ENCODE measurements at regions of chr7 and their contacts with region 1.

Region 1: DNA sequence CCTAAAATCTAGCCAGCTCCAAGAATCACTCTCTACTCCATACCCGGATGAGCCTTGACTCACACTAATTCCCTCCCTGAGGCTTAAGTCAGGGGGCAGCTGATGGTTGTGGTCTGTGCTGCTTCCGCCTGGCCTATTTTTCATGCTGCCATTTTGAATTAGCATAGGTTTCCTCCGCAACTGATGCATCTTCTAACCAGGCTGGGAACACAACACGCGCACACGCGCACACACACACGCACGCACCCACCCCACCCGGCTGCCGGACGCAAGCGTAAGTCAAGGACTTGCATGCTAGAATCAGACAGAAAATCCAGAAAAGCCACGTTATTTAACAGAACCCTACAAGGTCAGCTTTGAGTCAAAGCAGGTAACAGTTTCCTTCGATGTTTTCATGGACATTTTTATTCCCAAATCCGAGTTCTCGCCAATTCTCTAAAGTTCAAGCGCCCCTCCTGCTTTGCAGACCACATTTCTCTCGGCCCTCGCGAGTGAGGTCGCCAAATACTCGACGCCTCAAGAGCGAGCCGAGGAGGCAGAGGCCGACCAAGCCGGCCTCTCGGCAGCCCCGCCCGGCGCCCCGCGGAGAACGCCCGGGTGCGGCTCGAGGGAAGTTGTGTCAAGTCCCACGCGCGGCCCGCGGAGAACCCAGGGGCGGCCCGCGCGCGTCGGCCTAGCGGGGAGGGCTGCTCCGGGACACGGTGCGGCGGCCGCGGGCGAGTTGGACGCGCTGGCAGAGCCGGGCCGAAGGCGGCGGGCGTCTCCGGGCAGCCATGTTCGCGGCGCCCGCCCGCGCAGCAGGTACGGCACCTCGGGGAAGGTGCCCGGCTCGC is 961 bp downstream of the SCRN1 start:
- DNase-seq: peak in 1 of 2 experiments; percentile 36
- H3K4me3 ChIP-seq: peak overlapping the region; percentile 95
- H3K27ac ChIP-seq: peak overlapping the region; percentile 87
- H3K4me1 ChIP-seq: peaks cover 37% of the 10 kb centered on the region
- H3K27me3 ChIP-seq: no peaks in the 10 kb centered on the region
- CTCF ChIP-seq: no peak

Region 2: GRCh38 chr7:29878081-29878688 is 110.5 kb before region 1 on chr7:
- CTCF ChIA-PET with region 1: no interaction called
- POLR2A ChIA-PET with region 1: no interaction called
- intact Hi-C with region 1: no loop called
- DNase-seq: peak; percentile 50 to 59
- H3K4me3 ChIP-seq: no peak overlapping the region
- H3K27ac ChIP-seq: no peak overlapping the region
- H3K4me1 ChIP-seq: no peaks in the 10 kb centered on the region
- H3K27me3 ChIP-seq: no peaks in the 10 kb centered on the region
- CTCF ChIP-seq: peak; percentile 90

Region 3: DNA sequence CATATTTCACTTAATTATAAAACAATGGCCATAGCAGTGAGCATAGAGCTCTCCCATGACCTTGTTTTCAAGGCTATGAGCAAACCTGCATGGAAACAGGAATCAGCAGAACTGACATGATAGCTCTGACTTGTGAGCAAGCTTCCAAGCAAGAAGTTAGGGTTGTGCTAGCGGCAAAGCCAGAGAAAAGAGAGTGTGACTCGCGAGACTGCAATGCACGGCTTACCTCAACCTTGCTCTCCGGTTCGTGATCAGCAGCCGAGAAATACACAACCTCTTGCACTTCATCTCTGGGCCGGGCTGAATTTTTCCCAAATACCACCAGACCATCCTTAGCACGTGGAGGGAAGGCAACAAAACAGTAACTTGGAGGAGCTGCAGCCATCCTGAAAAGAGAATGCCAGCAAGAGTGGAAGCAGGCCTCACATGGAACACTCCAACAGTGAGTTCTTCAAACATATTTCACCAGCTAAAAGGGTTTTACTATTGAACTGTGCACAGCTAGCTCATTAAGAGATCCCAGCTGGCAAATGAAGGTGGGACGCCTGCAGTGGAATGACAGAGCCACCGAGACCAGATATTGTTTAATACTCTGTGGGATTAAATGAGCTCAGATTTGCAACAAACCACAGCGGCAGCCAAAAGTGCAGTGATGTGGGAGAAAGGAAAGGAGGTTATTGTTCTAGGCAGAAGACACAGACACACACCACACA is 19.8 kb before region 1 on chr7:
- CTCF ChIA-PET with region 1: interaction called, 3 read pairs
- POLR2A ChIA-PET with region 1: interaction called, 10 read pairs
- intact Hi-C with region 1: no loop called
- DNase-seq: no peak
- H3K4me3 ChIP-seq: no peak overlapping the region
- H3K27ac ChIP-seq: no peak overlapping the region
- H3K4me1 ChIP-seq: no peaks in the 10 kb centered on the region
- H3K27me3 ChIP-seq: no peaks in the 10 kb centered on the region
- CTCF ChIP-seq: no peak

Region 4: GRCh38 chr7:30003098-30003497 is 14.5 kb after region 1 on chr7:
- CTCF ChIA-PET with region 1: no interaction called
- POLR2A ChIA-PET with region 1: interaction called, 28 read pairs
- intact Hi-C with region 1: no loop called
- DNase-seq: no peak
- H3K4me3 ChIP-seq: no peak overlapping the region
- H3K27ac ChIP-seq: no peak overlapping the region
- H3K4me1 ChIP-seq: no peaks in the 10 kb centered on the region
- H3K27me3 ChIP-seq: no peaks in the 10 kb centered on the region
- CTCF ChIP-seq: no peak

Measured in PC-9 (cell line).